ENCODE measurements at regions of chr3 and their contacts with region 1.

Region 1: DNA sequence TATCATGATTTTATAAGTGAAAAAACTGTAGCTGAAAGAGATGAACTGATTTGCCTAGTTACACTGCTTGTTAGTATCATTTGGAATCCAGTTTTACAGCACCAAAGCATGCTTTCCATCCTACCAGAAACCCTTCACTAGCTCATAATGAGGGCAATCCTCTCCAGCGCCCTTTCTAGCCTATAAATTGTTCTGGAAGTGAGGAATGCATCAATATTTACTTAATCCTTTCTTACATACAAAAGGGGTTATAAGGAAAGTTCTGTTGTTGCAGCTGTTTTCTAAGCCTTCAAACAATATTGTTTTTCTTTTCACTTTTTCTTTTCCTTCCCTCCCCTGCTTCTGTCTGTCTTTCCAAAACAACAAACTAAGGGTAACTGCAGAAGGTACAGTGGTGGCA is 11.0 kb upstream of the PCCB start:
- DNase-seq: no peak
- H3K4me3 ChIP-seq: no peak overlapping the region
- H3K27ac ChIP-seq: no peak overlapping the region
- H3K4me1 ChIP-seq: no peaks in the 10 kb centered on the region
- H3K27me3 ChIP-seq: no peaks in the 10 kb centered on the region
- CTCF ChIP-seq: no peak

Region 2: GRCh38 chr3:136336329-136337100 is 97.4 kb after region 1 on chr3:
- CTCF ChIA-PET with region 1: no interaction called
- dilution Hi-C with region 1: loop called (anchors 5 kb)
- in situ Hi-C with region 1: no loop called
- intact Hi-C with region 1: no loop called
- DNase-seq: no peak
- H3K4me3 ChIP-seq: no peak overlapping the region
- H3K27ac ChIP-seq: no peak overlapping the region
- H3K4me1 ChIP-seq: no peaks in the 10 kb centered on the region
- H3K27me3 ChIP-seq: no peaks in the 10 kb centered on the region
- CTCF ChIP-seq: no peak